AG04450 (cell line): ENCODE measurements at regions of chr14 and their contacts with region 1.

Region 1: DNA sequence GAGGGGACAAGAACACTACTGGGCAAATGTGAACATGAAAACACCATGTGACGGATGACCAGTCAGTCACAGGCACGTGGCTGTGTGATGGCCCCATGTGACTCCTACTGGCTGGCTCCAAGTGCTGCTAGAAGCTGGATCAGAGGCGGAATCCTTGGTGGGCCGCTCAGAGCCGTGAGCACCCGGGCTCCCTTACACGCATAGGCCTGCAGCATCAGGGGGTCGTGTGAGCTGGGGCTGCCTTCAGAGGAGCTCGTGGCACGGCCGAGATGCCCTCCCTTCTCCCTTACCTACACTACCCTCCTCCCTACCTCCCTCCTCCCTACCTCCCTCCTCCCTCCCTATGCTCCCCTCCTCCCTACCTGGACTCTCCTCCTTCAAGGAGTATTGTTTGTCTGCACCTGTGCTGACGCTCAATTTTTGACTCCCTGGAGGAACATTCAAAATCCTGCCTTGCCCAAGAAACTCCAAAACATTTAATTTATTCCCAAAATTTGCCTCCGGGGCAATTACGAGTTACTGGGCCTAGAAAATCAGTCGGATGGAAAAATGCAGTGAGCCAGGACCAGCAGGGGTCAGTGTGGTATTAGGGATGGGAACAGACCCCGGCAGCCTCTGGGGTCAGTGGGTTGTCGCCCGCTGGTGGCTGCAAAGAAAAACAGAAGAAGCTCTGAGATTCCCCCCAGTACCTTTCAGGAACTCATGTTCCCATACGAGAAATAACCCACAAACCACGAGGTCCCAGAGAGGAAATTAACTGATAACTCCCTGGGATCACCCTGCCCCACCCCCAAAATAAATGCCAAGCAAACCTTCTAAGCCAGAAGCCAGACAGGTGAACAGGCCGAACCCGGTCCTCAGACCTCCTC is 61.2 kb downstream of the C14orf132 start:
- DNase-seq: peak; percentile 66
- H3K4me3 ChIP-seq: no peak overlapping the region
- H3K27ac ChIP-seq: no peak overlapping the region
- H3K27me3 ChIP-seq: no peaks in the 10 kb centered on the region
- CTCF ChIP-seq: peak; percentile 97

Region 2: DNA sequence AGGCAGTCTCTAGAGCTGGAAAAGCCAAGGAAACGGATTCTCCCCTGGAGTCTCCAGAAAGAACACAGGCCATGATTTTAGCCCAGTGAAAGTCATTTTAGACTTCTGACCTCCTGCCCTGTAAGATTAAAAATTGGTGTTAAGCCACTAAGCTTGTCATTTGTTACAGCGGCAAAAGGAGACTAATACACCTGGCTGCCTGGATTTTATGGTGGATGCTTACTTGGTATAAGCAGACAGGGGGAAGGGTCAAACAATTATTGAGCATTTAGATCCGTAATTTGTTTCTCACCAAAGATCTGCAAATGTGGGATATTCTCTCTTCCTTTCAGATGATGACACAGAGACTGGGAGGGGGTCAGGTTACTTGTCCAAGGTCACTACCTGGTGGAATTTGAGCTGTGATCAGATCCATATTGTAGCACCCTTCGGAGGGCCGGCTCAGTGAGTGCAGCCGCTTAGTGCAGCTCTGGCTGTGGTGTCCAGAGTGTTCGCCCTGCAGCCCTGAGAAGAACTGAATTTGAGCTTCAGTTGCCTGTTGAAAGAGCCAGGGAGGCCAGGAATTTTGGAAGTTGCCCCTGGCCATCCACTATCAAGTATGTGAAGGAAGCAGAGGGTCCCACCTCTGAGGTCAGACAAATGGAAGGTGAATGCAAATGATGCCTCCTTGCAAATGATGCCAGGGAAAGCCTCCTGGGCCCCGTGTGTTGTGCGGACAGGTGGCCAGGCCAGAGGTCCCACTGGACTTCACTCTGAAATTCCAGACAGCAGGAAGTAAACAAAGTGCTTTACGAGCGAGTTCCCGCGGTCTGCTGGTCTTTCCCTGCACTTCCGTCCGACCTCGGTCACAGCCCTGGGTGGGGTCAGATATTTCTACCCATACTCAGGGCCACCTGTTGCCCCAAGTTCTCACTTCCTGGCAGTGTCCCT is 550.5 kb before region 1 on chr14:
- CTCF ChIA-PET with region 1: no interaction called
- POLR2A ChIA-PET with region 1: no interaction called
- DNase-seq: no peak
- H3K4me3 ChIP-seq: no peak overlapping the region
- H3K27ac ChIP-seq: no peak overlapping the region
- H3K27me3 ChIP-seq: no peaks in the 10 kb centered on the region
- CTCF ChIP-seq: no peak

Region 3: DNA sequence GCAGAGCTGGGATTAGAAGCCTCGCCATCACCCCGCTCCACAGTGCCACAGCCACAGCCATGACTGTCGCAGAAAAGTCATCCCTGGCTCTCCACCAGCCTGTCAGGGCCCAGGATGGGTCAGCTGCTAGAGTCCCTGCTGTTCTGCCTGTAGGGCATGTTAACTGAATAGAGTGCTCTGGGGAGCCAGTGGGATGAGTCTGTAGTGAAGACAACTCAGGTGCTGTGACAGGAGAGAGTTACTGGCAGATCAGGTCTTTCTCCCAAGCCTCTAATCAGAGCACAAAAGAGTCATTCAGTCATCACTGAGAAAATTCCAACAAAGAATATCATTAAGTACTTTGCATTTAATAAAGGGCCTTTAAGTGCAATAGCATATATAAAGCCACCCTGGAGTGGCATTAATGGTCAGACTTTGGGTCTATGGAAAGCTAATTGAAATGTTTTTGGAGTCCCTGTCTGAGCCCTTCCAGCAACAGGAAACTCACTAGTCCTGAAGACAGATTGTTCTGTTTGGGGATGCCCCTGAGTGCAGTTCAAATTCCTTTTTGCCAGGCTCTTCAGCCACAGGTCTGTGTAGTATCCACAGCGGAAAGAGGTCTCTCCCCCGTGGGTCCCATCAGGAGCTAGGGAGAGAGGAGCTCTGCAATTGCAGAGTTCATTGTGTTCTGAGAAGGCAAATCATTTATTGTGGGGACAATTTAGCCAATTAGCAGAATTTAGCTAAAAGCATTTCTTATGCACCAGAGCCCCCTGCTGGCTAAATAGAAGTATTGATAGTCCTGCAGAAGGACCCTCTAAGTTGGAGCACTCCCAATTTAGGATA is 106.4 kb before region 1 on chr14:
- CTCF ChIA-PET with region 1: interaction called, 154 read pairs
- POLR2A ChIA-PET with region 1: interaction called, 4 read pairs
- DNase-seq: peak; percentile 18
- H3K4me3 ChIP-seq: no peak overlapping the region
- H3K27ac ChIP-seq: no peak overlapping the region
- H3K27me3 ChIP-seq: peaks cover 16% of the 10 kb centered on the region
- CTCF ChIP-seq: peak; percentile 81

Region 4: GRCh38 chr14:96154900-96155299 is 54.5 kb after region 1 on chr14:
- CTCF ChIA-PET with region 1: no interaction called
- POLR2A ChIA-PET with region 1: no interaction called
- DNase-seq: no peak
- H3K4me3 ChIP-seq: no peak overlapping the region
- H3K27ac ChIP-seq: no peak overlapping the region
- H3K27me3 ChIP-seq: no peaks in the 10 kb centered on the region
- CTCF ChIP-seq: no peak

Region 5: DNA sequence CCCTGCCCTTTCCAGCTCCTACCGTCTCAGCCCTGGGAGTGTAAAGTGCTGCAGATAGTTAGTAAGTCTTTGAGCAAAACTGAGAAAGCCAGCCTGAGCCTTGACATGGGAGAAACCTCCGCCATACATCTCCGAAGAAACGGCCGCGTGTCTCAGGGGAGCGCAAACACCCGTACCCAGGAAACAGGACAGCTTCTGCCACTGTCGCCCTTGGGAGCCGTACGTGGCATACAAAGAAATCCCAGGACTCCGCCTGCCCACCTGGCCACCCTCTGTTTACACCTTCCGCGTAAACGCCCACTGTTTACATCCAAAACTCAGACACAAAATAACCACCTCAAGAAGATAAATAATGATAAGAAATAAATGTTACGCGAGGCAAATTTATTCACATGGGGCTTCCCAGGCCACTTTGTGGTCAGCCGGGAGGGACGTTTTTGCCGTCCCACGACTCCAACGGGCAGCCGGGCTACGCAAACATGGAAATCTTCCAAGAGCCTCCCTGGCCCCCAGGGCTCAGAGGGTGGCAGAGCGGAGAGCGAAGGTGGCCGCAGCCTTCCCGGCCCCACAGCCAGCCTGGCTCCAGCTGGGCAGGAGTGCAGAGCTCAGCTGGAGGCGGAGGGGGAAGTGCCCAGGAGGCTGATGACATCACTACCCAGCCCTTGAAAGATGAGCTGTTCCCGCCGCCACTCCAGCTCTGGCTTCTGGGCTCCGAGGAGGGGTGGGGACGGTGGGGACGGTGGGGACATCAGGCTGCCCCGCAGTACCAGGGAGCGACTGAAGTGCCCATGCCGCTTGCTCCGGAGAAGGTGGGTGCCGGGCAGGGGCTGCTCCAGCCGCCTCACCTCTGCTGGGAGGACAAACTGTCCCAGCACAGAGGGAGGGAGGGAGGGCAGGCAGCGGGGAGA is 104.0 kb after region 1 on chr14 and contains the start of gene BDKRB2:
- CTCF ChIA-PET with region 1: interaction called, 42 read pairs
- POLR2A ChIA-PET with region 1: interaction called, 26 read pairs
- DNase-seq: peak; percentile 78
- H3K4me3 ChIP-seq: peak within 1 kb of the TSS; percentile 76
- H3K27ac ChIP-seq: peak within 1 kb of the TSS; percentile 83
- H3K27me3 ChIP-seq: no peaks in the 10 kb centered on the region
- CTCF ChIP-seq: no peak
- polyA plus RNA-seq, gene BDKRB2: 182 and 212 TPM in 2 replicates

Region 6: DNA sequence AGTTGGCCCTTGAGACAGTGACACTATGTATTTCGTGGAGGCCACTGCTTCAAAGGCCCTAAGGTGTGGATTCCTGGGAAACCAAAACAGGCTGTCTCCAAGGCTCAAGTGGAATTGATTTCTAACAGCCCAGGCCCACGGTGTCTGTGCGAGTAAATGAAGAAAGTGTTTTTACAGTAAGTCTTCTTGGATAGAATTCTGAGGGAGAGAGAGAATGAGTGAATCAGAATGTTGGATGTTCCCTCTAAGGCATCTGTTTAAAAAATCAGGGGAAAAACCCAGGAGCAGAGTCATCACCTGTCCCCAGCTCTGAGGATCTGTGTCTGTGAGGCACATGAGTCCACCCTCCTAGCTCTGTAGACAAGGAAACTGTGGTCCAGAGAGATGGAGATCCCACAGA is 133.3 kb after region 1 on chr14:
- CTCF ChIA-PET with region 1: interaction called, 10 read pairs
- POLR2A ChIA-PET with region 1: no interaction called
- DNase-seq: no peak
- H3K4me3 ChIP-seq: no peak overlapping the region
- H3K27ac ChIP-seq: peak overlapping the region; percentile 39
- H3K27me3 ChIP-seq: no peaks in the 10 kb centered on the region
- CTCF ChIP-seq: no peak

Region 7: DNA sequence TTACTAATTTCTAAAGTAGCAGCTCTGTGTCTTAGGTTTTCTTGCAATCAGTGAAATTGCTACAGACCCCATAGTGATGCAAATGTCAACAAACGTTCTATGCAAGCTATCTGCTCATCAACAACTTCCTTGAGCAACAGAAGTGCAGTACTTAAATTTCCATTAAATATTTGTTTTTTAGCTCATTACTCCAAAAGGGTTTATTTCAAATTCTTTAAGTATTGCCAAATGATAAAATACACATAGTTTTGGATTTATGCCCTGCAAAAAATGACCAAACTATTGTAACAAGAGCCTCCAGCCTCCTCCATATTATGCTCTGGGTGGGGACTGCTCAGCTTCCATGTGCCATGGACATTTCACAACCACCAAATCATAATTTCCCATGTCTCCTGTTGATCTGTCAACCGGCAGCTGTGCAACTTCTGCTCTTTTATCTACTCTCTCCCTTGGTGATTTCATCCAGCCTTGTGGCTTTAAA is 160.0 kb after region 1 on chr14:
- CTCF ChIA-PET with region 1: interaction called, 30 read pairs
- POLR2A ChIA-PET with region 1: interaction called, 8 read pairs
- DNase-seq: no peak
- H3K4me3 ChIP-seq: peak overlapping the region; percentile 26
- H3K27ac ChIP-seq: peak overlapping the region; percentile 53
- H3K27me3 ChIP-seq: no peaks in the 10 kb centered on the region
- CTCF ChIP-seq: no peak

Region 8: GRCh38 chr14:96285667-96286066 is 185.3 kb after region 1 on chr14:
- CTCF ChIA-PET with region 1: interaction called, 218 read pairs
- POLR2A ChIA-PET with region 1: no interaction called
- DNase-seq: no peak
- H3K4me3 ChIP-seq: peak overlapping the region; percentile 5
- H3K27ac ChIP-seq: no peak overlapping the region
- H3K27me3 ChIP-seq: no peaks in the 10 kb centered on the region
- CTCF ChIP-seq: no peak

Region 9: GRCh38 chr14:96424109-96424989 is 324.0 kb after region 1 on chr14:
- CTCF ChIA-PET with region 1: interaction called, 12 read pairs
- POLR2A ChIA-PET with region 1: no interaction called
- DNase-seq: peak; percentile 46
- H3K4me3 ChIP-seq: peak overlapping the region; percentile 50
- H3K27ac ChIP-seq: no peak overlapping the region
- H3K27me3 ChIP-seq: peaks cover 4% of the 10 kb centered on the region
- CTCF ChIP-seq: peak; percentile 77